ENCODE measurements at regions of chr15 and their contacts with region 1.

Region 1: DNA sequence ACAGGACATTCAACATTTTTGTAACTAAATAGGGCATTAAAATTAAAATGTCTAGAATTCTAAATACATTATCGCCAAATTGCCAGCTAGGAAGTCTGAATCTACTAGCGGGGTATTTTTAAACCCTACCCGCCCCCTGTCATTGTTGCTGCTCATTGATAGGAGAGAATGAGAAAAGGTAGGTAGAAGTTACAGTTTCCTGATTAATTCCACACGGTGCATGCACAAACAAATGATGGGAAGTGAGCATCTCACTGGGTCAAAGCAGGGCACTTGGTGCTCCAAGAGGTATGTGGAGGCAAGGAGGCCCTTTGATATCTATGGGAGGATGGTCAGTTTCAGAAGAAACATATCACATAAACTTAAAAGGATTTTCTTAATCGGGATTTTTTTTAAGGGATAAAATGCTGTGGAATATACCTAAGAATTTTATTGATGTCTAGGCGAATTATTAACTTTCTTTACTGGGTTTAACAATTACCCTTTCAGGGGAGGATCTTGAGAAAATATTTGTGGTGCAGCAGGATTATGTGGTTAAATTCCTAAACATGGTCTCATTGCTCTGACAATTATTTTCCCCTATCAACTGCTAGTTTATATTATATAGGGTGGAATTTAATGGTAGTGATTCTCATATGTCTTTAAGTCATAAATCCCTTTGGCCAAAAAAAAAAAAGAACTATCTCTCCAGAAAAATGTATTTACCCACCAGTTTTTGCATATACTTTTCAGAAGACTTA is 236.0 kb upstream of the GOLGA6L4 start:
- DNase-seq: no peak
- ATAC-seq: no peak
- H3K4me3 ChIP-seq: no peak overlapping the region
- H3K27ac ChIP-seq: no peak overlapping the region
- H3K4me1 ChIP-seq: no peaks in the 10 kb centered on the region
- H3K27me3 ChIP-seq: no peaks in the 10 kb centered on the region

Region 2: GRCh38 chr15:83837945-83838571 is 161.5 kb before region 1 on chr15:
- intact Hi-C with region 1: no loop called
- DNase-seq: peak; percentile 56 to 74 (median 73)
- ATAC-seq: peak; percentile 50 to 73
- H3K4me3 ChIP-seq: no peak overlapping the region
- H3K27ac ChIP-seq: no peak overlapping the region
- H3K4me1 ChIP-seq: no peaks in the 10 kb centered on the region
- H3K27me3 ChIP-seq: no peaks in the 10 kb centered on the region

Region 3: DNA sequence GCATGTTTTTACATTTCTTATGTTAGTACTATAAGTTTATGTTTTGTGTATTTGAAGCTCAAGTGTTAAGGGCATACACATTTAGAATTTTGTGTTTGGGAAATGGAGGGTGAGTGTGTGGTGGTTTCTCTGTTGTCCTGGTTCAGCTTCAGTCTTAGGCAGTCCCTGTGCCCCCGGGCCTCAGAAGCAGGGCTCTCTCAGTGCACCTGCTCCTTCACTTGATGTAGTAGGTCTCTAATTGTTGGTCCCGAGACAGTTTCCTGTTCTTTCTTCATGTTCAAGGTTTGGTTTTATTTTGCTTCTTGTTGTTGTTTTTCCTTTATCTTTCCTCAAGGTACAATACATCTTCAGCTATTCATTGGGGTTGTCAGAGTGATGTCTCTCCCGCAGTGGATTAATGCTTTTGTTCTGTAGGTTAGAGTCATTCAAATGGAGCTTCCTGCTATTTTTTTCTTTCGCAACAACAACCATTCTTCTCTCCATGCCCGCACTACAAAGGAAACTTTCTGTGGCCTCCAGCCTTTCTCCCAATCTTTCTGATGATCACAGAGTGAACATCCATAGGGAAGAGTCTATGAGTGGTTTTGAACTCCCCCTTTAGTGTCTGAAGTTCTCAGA is 58.3 kb after region 1 on chr15:
- intact Hi-C with region 1: loop called in 1 of 4 experiments (anchors 10 kb)
- DNase-seq: no peak
- ATAC-seq: no peak
- H3K4me3 ChIP-seq: no peak overlapping the region
- H3K27ac ChIP-seq: no peak overlapping the region
- H3K4me1 ChIP-seq: no peaks in the 10 kb centered on the region
- H3K27me3 ChIP-seq: no peaks in the 10 kb centered on the region

Region 4: GRCh38 chr15:84099181-84099580 is 99.6 kb after region 1 on chr15:
- intact Hi-C with region 1: no loop called
- DNase-seq: peak; percentile 31 to 73 (median 69)
- ATAC-seq: no peak
- H3K4me3 ChIP-seq: no peak overlapping the region
- H3K27ac ChIP-seq: no peak overlapping the region
- H3K4me1 ChIP-seq: no peaks in the 10 kb centered on the region
- H3K27me3 ChIP-seq: no peaks in the 10 kb centered on the region